ENCODE measurements at regions of chr11 and their contacts with region 1.

Region 1: DNA sequence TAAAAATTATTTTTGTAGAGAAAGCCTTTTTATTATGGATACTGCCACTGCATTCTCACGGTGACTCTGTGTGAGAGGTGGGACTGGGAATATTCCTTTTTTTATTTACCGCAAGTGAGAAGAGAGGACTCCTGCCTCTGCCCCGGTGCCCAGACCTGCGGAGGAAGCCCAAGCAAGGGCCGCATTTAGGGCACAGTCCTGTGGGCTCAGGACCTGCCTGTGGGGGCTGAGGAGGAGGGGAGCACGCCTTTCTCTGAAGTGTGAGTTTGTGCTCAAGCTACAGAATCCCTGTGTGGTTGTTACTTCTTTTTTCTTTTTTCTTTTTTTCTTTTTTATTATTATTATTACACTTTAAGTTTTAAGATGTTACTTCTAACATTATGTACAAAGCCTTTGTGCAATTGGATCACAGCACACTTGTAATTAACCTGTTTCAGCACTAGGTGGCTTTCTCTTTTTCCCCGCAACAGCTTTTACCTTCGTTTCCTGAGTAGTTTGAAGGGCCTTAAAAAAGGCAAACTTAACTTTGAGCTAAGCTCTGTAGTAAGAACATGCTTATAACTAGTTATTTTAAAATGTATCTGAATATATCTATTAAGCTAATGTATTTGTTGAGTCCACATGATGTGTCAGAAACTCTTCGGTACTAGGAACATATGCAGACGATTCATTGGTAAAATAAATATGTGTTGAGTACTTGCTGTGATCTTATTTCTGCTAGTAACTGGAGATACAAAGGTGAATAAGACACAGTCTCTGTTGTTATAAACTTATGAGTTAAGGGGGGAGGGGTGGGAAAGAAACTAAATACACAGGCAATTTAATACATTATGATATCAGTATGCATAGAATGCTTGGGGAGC is 18.3 kb downstream of the AMOTL1 start:
- DNase-seq: no peak
- H3K4me3 Mint-ChIP-seq: no peak overlapping the region
- H3K27ac Mint-ChIP-seq: no peak overlapping the region
- H3K4me1 Mint-ChIP-seq: peaks cover 1% of the 10 kb centered on the region
- H3K27me3 Mint-ChIP-seq: peaks cover 20% of the 10 kb centered on the region

Region 2: GRCh38 chr11:94897330-94897768 is 110.9 kb after region 1 on chr11:
- CTCF ChIA-PET with region 1: interaction called, 10 read pairs
- POLR2A ChIA-PET with region 1: no interaction called
- DNase-seq: peak; percentile 31
- H3K4me3 Mint-ChIP-seq: no peak overlapping the region
- H3K27ac Mint-ChIP-seq: no peak overlapping the region
- H3K4me1 Mint-ChIP-seq: no peaks in the 10 kb centered on the region
- H3K27me3 Mint-ChIP-seq: no peaks in the 10 kb centered on the region

Measured in activated CD4-positive, alpha-beta memory T cell treated with anti-CD3 and anti-CD28 coated beads, Interleukin-2, amount 10 ng/mL, durations not matched to agents 7 days and 5 days (primary cell).